ENCODE measurements at regions of chr20 and their contacts with region 1.

Region 1: DNA sequence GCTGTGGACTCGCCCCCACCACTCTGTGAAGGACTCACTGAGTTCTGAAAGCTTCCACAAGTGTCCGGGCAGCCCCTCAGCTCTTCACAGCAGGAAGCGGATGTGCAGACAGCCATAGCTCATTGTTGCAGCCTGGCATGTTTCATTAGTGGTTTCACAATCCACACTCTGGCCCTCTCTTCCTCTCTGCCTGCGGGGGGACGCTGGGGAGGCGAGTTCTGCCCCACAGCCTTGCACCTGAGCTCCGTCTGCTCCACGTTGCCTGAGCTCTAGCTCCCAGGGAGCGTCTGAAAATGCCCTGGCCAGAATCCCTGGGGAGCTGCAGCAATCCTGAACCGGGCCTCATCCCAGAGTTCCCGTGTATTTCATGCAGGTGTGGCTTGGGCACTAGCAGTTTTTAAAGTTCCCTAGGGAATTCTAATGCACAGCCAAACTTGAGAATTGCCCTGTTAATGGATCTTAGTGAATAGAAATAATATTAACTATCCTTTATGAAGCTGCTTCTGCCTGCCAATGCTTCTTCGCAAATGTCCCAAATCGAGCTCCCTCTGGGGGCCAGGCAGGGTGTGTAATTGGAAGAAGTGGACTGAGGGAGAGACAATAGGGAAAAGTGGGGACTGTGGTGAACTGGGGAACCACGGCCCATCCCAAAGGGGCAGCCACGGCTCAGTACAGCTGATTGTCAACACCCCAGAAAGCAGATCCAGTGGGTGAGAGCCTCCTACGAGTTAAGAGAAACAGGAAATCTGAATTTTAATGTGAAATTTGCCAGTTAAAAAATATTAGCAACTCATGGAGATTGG is 51.5 kb downstream of the CTCFL start:
- DNase-seq: peak; percentile 93
- H3K4me3 ChIP-seq: peak overlapping the region; percentile 59
- H3K27ac ChIP-seq: peak overlapping the region; percentile 99
- H3K4me1 ChIP-seq: peaks cover 99% of the 10 kb centered on the region
- CTCF ChIP-seq: peak; percentile 69

Region 2: DNA sequence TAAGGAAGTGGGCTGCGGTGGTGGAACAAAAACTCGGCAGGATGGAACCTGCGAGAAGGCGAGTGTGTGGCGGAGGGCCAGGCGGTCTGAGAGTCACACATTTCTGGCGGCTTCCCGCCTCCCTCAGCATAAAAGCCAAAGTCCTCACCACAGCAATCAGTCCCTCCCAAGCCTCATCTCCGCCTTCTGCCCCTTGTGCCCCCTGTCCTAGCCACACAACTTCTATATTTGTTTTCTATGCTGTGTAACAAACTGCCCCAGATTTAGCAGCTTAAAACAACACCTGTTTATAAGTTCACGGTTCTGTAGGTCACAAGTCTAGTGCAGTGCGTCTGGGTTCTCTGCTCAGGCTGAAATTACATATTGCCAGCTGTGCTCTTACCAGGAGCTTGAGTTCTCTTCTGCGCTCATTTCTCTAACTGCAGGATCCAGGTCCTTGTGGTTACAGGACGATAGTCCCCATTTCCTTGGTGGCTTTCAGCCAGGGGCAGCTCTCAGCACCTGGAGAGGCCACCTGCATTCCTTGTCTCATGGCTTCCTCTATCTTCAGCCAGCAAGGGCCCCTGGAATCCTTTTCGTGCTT is 155.6 kb before region 1 on chr20:
- CTCF ChIA-PET with region 1: no interaction called
- POLR2A ChIA-PET with region 1: interaction called, 3 read pairs
- intact Hi-C with region 1: loop called (anchors 5 kb)
- DNase-seq: peak; percentile 91
- H3K4me3 ChIP-seq: peak overlapping the region; percentile 37
- H3K27ac ChIP-seq: peak overlapping the region; percentile 95
- H3K4me1 ChIP-seq: peaks cover 100% of the 10 kb centered on the region
- CTCF ChIP-seq: no peak

Region 3: DNA sequence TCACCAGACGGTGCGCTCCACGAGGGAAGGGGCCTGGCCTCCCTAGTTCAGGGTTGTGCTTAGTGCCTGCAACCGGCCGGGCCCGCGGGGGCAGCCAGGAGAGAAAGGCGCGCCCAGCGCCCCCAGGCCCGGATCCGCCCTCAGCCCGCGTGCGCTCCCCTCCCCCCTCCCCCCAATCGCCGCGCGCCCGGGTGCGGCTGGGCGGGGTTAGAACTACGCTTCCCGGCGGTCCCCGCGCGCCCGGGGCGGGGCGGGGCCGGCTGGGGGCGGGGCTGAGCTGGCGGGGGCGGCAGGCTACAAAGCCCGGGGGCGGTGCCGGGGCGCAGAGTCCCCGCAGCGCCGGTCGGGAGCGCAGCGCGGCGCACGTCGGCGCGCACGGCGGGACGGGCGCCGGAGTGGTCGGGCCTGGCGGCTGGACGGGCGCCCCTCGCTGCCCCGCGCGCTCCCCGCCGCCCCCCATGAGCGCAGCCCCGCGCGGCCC is 82.3 kb before region 1 on chr20 and contains the start of gene RBM38:
- CTCF ChIA-PET with region 1: interaction called, 4 read pairs
- POLR2A ChIA-PET with region 1: interaction called, 11 read pairs
- intact Hi-C with region 1: no loop called
- DNase-seq: peak; percentile 87
- H3K4me3 ChIP-seq: peak within 1 kb of the TSS; percentile 99
- H3K27ac ChIP-seq: peak within 1 kb of the TSS; percentile 97
- H3K4me1 ChIP-seq: peaks cover 61% of the 10 kb centered on the region
- CTCF ChIP-seq: no peak
- total RNA-seq, gene RBM38: 136 and 174 TPM in 2 replicates

Region 4: GRCh38 chr20:57398231-57398821 is 75.1 kb before region 1 on chr20:
- CTCF ChIA-PET with region 1: interaction called, 6 read pairs
- POLR2A ChIA-PET with region 1: interaction called, 24 read pairs
- intact Hi-C with region 1: no loop called
- DNase-seq: peak; percentile 97
- H3K4me3 ChIP-seq: peak overlapping the region; percentile 99
- H3K27ac ChIP-seq: peak overlapping the region; percentile 97
- H3K4me1 ChIP-seq: peaks cover 88% of the 10 kb centered on the region
- CTCF ChIP-seq: 0 out of 2 replicates have a peak, but pooled peaks have one; percentile 33

Region 5: DNA sequence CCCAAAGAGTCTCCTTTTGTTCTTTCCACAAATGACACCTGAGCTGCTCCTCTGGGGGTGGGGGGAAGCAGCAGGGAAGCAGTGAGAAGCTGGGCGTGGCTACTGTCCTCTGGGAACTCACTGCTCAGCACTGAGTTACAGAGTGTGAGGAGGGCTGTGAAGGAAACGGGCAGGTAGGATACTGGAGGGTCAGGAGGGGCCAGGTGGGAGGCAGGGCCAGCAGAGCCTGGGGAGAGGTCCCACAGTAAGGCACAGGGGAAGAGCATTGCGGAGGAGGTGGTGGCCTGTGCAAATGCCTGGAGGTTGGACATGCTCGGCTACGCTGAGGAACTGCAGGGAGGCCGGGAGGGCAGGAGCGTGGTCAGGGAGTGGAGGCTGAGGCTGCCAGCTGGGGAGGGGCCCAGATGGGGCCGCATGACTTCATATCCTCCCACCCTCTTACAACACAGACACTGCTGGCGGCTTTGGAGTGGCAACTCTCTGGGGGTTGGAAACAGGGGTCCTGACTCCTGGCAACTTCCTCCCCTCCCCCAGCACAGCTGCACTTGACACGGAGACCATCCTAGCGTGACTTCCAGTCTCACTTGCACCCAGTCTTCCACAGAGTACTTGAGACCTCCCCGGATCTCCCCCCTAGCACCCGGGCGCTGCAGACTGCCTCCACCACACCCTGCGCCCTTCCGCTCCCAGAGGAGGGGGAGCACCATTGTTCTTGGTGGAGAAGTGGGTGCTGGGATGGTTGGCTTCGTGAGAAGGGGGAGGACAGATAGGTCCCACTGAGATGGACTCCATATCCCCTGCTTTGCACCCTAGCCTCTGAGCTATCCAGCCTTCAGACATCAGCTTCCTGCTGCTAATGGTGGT is 48.1 kb before region 1 on chr20:
- CTCF ChIA-PET with region 1: no interaction called
- POLR2A ChIA-PET with region 1: interaction called, 11 read pairs
- intact Hi-C with region 1: no loop called
- DNase-seq: peak; percentile 84
- H3K4me3 ChIP-seq: peak overlapping the region; percentile 51
- H3K27ac ChIP-seq: peak overlapping the region; percentile 53
- H3K4me1 ChIP-seq: peaks cover 50% of the 10 kb centered on the region
- CTCF ChIP-seq: no peak; the same call in 1 of the 2 replicates

Region 6: DNA sequence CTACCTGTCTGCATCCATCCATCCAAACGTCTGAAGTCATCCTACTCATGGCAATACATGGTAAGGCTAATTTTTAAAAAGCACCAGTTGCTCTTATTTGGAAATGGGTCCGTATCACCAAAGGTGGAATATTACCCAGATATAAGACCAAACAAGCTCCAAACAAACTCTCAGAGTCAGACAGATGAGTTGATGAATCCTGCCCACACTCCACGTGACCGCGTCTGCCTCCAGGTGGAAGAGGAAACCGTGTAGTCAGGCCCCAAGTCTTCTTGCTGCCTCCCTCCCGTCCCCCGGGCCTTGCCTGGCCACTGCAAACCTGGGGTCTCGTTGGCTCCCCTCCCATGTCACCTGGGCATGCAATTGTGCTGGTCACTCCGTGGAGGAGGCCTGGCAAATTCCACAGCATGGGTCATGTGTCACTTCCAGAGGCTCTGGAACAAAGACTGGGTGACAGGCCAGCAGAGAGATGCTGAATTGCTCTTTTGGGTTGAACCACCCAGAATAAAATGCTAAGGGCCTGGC is 19.7 kb after region 1 on chr20:
- CTCF ChIA-PET with region 1: interaction called, 7 read pairs
- POLR2A ChIA-PET with region 1: interaction called, 22 read pairs
- intact Hi-C with region 1: loop called (anchors 1 kb)
- DNase-seq: peak; percentile 62
- H3K4me3 ChIP-seq: peak overlapping the region; percentile 67
- H3K27ac ChIP-seq: peak overlapping the region; percentile 82
- H3K4me1 ChIP-seq: peaks cover 63% of the 10 kb centered on the region
- CTCF ChIP-seq: no peak

Region 7: GRCh38 chr20:57498425-57499400 is 25.3 kb after region 1 on chr20:
- CTCF ChIA-PET with region 1: interaction called, 7 read pairs
- POLR2A ChIA-PET with region 1: interaction called, 22 read pairs
- intact Hi-C with region 1: loop called (anchors 1 kb)
- DNase-seq: peak; percentile 70
- H3K4me3 ChIP-seq: no peak overlapping the region
- H3K27ac ChIP-seq: peak overlapping the region; percentile 14
- H3K4me1 ChIP-seq: peaks cover 41% of the 10 kb centered on the region
- CTCF ChIP-seq: peak; percentile 75